ENCODE measurements at regions of chr17 and their contacts with region 1.

Region 1: GRCh38 chr17:31216053-31216751 is 80.8 kb downstream of the OMG start:
- DNase-seq: no peak
- ATAC-seq: no peak
- H3K4me3 ChIP-seq: no peak overlapping the region
- H3K27ac ChIP-seq: no peak overlapping the region
- H3K4me1 ChIP-seq: no peaks in the 10 kb centered on the region
- H3K27me3 ChIP-seq: no peaks in the 10 kb centered on the region
- CTCF ChIP-seq: peak; percentile 59; the same call in 1 of the 2 replicates

Region 2: DNA sequence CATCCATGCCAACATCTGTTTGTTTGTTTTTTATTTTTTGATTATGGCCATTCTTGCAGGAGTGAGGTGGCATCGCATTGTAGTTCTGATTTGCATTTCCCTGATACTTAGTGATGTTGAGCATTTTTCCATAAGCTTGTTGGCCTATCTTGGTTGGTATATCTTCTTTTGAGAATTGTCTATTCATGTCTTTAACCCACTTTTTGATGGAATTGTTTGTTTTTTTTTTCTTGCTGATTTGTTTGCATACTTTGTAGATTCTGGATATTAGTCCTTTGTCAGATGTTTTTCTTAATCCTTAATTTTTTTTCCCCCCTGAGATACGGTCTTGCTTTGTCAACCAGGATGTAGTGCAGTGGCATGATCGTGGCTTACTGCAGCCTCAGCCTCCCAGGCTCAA is 202.4 kb before region 1 on chr17:
- CTCF ChIA-PET with region 1: interaction called, 5 read pairs
- POLR2A ChIA-PET with region 1: no interaction called
- in situ Hi-C with region 1: no loop called
- intact Hi-C with region 1: loop called (anchors 2 kb)
- DNase-seq: no peak
- ATAC-seq: no peak
- H3K4me3 ChIP-seq: no peak overlapping the region
- H3K27ac ChIP-seq: no peak overlapping the region
- H3K4me1 ChIP-seq: no peaks in the 10 kb centered on the region
- H3K27me3 ChIP-seq: no peaks in the 10 kb centered on the region
- CTCF ChIP-seq: no peak

Region 3: DNA sequence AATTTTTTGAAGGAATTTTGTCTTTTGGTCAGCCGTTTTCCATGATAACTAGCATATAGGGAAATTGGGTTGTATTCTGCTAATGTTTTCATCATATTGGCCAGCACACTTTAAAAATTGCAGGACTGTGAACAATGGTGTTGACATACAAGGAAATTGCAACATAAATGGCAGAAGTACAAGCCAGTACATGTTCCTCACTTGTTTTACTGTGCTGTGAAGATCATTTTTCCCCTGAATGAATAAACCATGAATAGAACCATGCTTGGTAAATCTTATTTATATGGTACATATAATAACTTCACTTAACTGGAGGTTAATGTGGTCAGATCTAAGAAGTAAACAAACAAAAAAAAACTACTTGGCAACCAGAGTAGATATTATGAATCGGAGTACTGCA is 58.0 kb after region 1 on chr17:
- CTCF ChIA-PET with region 1: no interaction called
- POLR2A ChIA-PET with region 1: no interaction called
- in situ Hi-C with region 1: no loop called
- intact Hi-C with region 1: no loop called
- DNase-seq: no peak
- ATAC-seq: no peak
- H3K4me3 ChIP-seq: no peak overlapping the region
- H3K27ac ChIP-seq: no peak overlapping the region
- H3K4me1 ChIP-seq: peaks cover 4% of the 10 kb centered on the region; the same call in 1 of the 2 replicates
- H3K27me3 ChIP-seq: no peaks in the 10 kb centered on the region
- CTCF ChIP-seq: no peak

Measured in Panc1 (cell line).